GM10248 (cell line): ENCODE measurements at regions of chr3 and their contacts with region 1.

Region 1: DNA sequence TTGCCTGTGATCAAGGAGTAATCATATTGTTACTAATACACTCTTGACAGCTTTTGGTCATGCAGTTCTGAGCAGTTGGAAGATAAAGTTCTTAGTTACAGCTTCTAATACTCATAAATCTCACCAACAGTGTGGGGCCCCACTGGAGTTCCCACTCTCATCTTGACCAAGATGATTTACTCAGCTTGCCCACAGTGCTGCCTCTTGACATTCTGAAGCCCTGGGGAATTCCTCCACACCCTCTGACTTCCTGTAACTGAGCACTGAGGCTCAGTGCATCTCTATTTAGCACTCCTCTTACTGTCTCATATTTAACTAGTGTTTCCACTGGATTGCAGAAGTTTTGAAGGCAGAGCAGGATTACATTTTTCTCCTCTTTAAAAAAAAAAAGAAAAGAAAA is 1.9 kb upstream of the ARL6IP5 start:
- DNase-seq: peak; percentile 62
- CTCF ChIP-seq: no peak

Region 2: DNA sequence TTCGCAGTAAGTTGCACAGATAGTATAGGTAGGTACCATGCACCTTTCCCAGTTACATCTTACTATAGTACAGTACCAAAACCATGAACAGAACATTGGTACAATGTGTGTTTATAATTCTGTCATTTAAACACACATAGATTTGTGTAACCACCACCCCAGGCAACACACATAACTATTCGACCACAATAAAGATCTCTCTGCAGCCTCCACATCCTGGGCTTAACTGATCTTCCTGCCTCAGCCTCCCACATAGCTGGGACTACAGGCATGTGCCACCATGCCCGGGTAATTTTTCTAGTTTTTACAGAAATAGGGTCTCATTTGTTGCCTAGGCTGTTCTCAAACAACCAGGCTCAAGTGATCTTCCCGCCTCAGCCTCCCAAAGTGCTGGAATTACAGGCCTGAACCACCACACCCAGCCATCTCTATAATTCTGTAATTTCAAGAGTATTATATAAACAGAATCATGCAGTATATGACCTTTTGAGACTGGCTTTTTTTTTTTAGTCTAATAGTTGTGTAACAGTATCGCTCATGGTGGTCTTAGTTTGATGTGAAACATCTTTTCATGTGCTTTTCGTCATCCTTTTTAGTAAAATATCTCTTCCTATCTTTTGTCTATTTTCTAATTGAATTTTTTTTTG is 17.4 kb before region 1 on chr3:
- CTCF ChIA-PET with region 1: interaction called, 10 read pairs
- POLR2A ChIA-PET with region 1: no interaction called
- DNase-seq: no peak
- CTCF ChIP-seq: no peak

Region 3: DNA sequence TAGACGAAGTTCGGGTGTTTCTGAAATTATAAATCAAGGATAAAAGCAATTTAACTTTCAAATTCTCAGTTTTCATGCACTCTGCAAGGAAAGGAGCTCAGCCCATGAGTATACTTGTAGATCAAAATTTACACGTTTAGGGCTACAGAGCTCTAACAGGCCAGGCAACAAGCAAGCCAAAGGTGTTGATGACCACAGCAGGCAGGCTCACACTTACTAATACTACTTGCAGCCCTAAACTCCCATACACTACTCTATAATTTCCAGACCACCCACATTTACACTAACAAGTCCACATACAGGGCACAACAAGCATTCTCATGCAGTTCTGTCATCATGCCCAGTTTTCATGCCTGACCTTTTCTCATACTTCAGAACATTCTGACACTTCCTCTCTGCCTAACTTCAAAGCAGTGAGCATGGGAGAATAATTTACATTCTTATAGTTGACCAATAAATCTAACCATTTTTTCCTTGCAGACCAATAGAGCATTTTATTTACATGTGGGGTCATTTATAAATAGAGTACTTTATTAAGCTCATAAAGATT is 427.8 kb after region 1 on chr3:
- CTCF ChIA-PET with region 1: no interaction called
- POLR2A ChIA-PET with region 1: no interaction called
- DNase-seq: no peak
- CTCF ChIP-seq: no peak